ENCODE measurements at regions of chr16 and their contacts with region 1.

Region 1: GRCh38 chr16:4465977-4466779 is 8.2 kb downstream of the NMRAL1 start:
- DNase-seq: peak; percentile 74 to 90 (median 80)
- ATAC-seq: peak; percentile 87 to 93 (median 91)
- H3K4me3 ChIP-seq: peak overlapping the region in 1 of 12 donors; percentile 9
- H3K27ac ChIP-seq: peak overlapping the region in 11 of 12 donors; percentile 67 to 92 (median 81)
- H3K4me1 ChIP-seq: peaks cover 0 to 14% (median 4%) of the 10 kb centered on the region in 12 donors
- H3K27me3 ChIP-seq: no peaks in the 10 kb centered on the region
- CTCF ChIP-seq: no peak
- POLR2A ChIP-seq: peak in 1 of 2 donors; percentile 51

Region 2: DNA sequence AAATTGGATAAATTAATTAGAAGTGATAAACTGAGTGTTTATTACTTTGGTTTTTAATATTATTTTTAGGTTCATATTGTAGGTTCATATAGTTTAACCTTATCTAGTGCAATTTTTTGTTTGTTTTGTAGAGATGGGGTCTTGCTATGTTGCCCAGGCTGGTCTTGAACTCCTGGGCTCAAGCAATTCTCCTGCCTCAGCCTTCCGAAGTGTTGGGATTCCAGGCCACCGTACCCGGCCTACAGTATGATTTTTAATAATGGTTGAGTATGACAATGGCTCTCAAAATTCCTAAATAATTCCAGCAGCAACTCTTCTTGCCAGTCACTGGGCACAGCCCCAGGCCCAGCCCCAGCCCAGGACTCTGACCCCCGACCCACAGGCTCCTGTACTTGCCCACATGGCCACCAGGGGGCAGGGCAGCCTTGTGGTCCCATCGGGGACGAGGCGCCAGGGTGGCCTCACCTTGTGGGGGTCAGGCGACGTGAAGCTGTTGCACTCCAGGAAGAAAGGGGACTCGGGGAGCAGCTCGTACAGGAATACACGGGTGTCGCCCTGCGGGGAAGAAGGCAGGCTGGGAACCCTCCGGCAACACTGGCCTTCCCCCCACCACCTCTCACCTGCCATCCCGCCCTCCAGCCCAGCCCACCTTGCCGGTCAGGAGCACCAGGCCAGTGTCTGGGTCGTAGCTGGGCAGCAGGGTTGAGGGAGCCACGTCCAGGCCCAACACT is 107.2 kb before region 1 on chr16:
- intact Hi-C with region 1: no loop called
- DNase-seq: peak in 3 of 5 donors; percentile 57 to 83 (median 72)
- ATAC-seq: peak; percentile 44 to 78 (median 68)
- H3K4me3 ChIP-seq: no peak overlapping the region
- H3K27ac ChIP-seq: no peak overlapping the region
- H3K4me1 ChIP-seq: peaks cover 0 to 3% (median 0%) of the 10 kb centered on the region in 12 donors
- H3K27me3 ChIP-seq: no peaks in the 10 kb centered on the region
- CTCF ChIP-seq: peak; percentile 90 to 96 (median 92)
- POLR2A ChIP-seq: no peak

Region 3: DNA sequence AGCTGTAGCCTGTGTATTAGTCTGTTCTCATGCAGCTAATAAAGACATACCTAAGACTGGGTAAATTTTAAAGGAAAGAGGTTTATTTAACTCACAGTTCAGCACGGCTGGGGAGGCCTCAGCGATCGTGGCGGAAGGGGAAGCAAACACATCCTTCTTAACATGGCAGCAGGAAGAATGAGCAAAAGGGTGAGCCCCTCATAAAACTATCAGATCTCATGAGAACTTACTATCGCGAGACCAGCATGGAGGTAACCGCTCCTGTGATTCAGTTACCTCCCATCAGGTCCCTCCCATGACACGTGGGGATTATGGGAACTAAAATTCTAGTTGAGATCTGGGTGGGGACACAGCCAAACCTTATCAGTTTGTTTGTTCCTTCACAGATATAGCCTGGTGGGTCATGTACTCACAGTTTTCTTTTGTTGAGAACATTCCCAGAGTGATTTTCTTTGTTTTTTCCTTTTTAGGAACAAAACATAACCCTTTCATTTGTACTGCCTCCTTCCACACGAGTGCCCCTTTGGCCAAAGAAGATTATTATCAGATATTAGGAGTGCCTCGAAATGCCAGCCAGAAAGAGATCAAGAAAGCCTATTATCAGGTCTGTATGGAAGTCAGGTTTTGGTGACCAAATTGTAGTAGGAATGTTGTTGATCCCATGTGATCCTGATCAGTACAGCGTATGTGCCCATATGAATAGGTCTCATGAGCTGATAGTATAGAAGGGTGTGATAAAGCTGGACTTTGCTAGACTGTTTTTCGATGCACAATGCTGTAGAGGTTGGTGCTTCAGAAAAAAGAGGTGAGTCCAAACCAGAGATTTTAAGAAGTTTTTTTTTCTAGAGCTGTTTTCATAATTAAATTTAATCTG is 32.0 kb before region 1 on chr16:
- intact Hi-C with region 1: loop called in 1 of 10 experiments (anchors 5 kb)
- DNase-seq: no peak
- ATAC-seq: no peak
- H3K4me3 ChIP-seq: no peak overlapping the region
- H3K27ac ChIP-seq: no peak overlapping the region
- H3K4me1 ChIP-seq: no peaks in the 10 kb centered on the region
- H3K27me3 ChIP-seq: no peaks in the 10 kb centered on the region
- CTCF ChIP-seq: no peak
- POLR2A ChIP-seq: no peak

Region 4: DNA sequence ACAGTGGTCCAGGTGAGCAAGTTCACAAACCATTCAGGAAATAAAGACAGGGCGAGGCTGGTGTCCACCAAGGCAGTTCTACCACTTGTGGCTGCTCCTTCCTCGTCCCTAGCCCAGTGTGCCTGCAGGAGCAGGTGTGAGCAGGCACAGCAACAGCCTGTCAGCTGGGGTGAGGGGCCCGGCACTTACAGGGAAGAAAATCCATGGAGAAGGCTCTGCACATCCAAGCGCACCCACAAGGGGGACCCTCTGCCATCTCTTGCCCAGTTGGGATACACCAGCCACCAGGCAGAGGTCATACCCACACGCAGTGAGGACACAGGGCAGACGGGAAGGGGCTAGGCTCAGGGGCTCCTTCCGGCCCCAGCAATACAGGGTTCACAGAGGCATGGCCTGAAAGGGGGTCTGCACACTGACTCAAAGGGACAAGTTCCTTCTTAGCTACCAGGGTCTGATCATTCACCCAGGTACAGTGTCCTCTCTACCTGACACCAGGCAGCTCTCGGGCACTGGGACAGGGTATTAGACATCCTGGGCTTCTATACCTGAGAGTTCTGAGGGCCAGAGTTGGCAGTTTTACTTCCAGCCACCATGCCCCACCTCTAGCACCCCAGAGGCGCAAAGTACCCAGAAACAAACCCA is 45.4 kb after region 1 on chr16:
- intact Hi-C with region 1: no loop called
- DNase-seq: peak in 4 of 5 donors; percentile 52 to 73 (median 66)
- ATAC-seq: peak; percentile 39 to 71 (median 63)
- H3K4me3 ChIP-seq: no peak overlapping the region
- H3K27ac ChIP-seq: peak overlapping the region in 11 of 12 donors; percentile 14 to 81 (median 60)
- H3K4me1 ChIP-seq: peaks cover 0 to 61% (median 51%) of the 10 kb centered on the region in 12 donors
- H3K27me3 ChIP-seq: no peaks in the 10 kb centered on the region
- CTCF ChIP-seq: peak; percentile 33 to 66 (median 55)
- POLR2A ChIP-seq: no peak